BJ (cell line): ENCODE measurements at regions of chr15 and their contacts with region 1.

Region 1: DNA sequence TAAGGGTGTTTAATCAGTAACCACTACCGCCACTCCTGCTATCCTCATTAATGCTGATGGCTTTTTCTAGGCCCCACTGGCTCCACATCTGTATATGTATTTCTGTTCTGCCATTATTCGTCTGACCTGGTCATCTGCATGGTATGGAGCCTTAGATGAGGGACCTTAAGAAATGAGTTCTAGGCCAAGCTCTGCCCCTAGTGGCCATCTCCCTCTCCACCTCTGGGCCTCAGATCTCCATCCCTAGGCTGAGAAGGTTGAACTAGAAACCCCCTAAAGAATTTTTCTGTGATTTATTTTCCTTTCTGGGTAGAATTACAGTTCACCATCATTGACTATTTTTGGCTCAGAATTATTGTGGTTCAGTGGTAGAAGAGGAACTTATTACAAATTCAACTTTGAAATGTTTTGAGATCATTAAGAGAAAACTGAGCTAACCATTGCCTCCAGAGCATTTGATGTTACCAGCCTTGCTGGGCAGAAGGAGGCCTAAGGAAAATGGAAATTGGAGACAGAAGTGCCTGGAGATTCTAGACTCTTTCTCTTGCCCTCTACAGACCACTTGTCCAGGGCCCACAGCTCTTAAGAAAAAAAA is 325.2 kb upstream of the NR2E3 start:
- DNase-seq: no peak
- H3K4me3 ChIP-seq: no peak overlapping the region
- H3K27me3 ChIP-seq: no peaks in the 10 kb centered on the region
- CTCF ChIP-seq: peak; percentile 43

Region 2: GRCh38 chr15:71201477-71201876 is 283.7 kb before region 1 on chr15:
- CTCF ChIA-PET with region 1: no interaction called
- POLR2A ChIA-PET with region 1: no interaction called
- DNase-seq: no peak
- H3K4me3 ChIP-seq: no peak overlapping the region
- H3K27me3 ChIP-seq: no peaks in the 10 kb centered on the region
- CTCF ChIP-seq: no peak

Region 3: GRCh38 chr15:71496336-71496955 is 11.2 kb after region 1 on chr15:
- CTCF ChIA-PET with region 1: interaction called, 13 read pairs
- POLR2A ChIA-PET with region 1: no interaction called
- DNase-seq: no peak
- H3K4me3 ChIP-seq: no peak overlapping the region
- H3K27me3 ChIP-seq: no peaks in the 10 kb centered on the region
- CTCF ChIP-seq: no peak

Region 4: DNA sequence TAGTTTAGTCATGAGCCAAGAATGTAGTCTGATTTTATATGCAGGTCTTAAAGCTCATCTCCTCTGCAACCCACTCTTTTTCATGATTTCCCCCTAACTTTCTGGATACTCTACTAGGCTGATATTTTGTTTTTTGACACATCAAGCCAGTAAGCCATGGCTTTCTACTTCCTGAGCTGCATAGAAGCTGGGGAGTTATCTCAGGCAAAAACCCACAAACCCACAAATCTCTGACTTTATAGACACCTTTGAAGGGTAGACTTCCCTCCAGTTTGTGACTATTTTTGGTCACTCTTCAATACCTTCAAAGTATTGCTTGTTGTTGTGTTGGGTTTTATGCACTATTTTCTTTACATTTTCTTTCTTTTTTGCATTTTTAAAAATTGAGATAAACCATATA is 941.6 kb after region 1 on chr15:
- CTCF ChIA-PET with region 1: no interaction called
- POLR2A ChIA-PET with region 1: no interaction called
- DNase-seq: no peak
- H3K4me3 ChIP-seq: no peak overlapping the region
- H3K27me3 ChIP-seq: no peaks in the 10 kb centered on the region; the same call in 1 of the 2 replicates
- CTCF ChIP-seq: no peak